Right ventricle myocardium superior (tissue), 1 donor: ENCODE measurements at regions of chr17 and their contacts with region 1.

Region 1: GRCh38 chr17:75589012-75589918 is 1.7 kb downstream of the MYO15B start:
- DNase-seq: peak; percentile 98
- ATAC-seq: peak; percentile 93

Region 2: GRCh38 chr17:75524953-75525719 is 64.1 kb before region 1 on chr17 and contains the start of gene LLGL2:
- intact Hi-C with region 1: loop called (anchors 5 kb)
- DNase-seq: peak; percentile 84
- ATAC-seq: peak; percentile 91
- total RNA-seq, gene LLGL2: 3.6 TPM